Prostate gland (tissue), 2 donors: ENCODE measurements at regions of chr19 and their contacts with region 1.

Region 1: DNA sequence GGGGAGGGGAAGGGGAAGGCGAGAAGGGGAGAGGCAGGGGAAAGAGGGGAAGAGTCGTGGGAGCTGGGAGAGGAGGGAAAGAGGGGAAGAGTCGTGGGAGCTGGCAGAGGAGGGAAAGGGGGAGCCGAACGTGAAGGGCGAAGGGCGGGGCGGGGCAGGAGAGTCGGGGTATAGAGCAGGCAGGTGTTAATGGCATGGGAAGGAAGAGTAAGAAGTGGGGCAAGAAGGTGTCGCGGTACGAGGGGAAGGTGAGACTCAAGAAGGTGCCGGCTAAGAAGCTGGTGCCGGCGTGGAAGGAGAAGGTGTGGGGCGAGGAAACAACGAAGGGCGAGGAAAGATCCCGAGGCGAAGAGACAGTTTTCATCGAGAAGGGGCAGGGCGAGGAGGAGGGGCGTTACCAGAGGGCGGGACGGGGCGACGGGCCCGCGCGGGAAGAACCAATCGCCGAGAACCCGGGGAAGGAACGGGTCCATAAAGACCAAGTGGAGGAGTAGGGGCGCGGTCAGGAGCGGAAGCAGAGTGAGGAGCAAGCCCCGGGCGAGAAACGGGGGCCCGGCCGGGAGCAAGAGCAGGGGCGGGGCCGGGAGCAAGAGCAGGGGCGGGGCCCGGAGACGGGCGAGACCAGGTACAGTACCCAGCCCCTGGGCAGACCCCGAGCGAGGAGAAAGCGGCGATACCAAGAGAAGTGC is 463 bp downstream of the CATSPERG start:
- DNase-seq: peak; percentile 94
- H3K4me3 ChIP-seq: peak overlapping the region; percentile 61 to 69
- H3K27ac ChIP-seq: peak overlapping the region; percentile 95 to 98
- H3K4me1 ChIP-seq: no peaks in the 10 kb centered on the region
- H3K27me3 ChIP-seq: no peaks in the 10 kb centered on the region
- CTCF ChIP-seq: no peak
- POLR2A ChIP-seq: peak; percentile 65

Region 2: GRCh38 chr19:37906869-37907734 is 429.0 kb before region 1 on chr19 and contains the start of gene SIPA1L3:
- intact Hi-C with region 1: loop called (anchors 10 kb)
- DNase-seq: peak; percentile 97
- H3K4me3 ChIP-seq: peak within 1 kb of the TSS; percentile 62 to 98
- H3K27ac ChIP-seq: peak within 1 kb of the TSS; percentile 50 to 74
- H3K4me1 ChIP-seq: peaks cover 7% of the 10 kb centered on the region
- H3K27me3 ChIP-seq: no peaks in the 10 kb centered on the region
- CTCF ChIP-seq: peak in 1 of 4 experiments; percentile 32
- POLR2A ChIP-seq: peak; percentile 83
- total RNA-seq, gene SIPA1L3: 48.8 to 63.5 TPM

Region 3: DNA sequence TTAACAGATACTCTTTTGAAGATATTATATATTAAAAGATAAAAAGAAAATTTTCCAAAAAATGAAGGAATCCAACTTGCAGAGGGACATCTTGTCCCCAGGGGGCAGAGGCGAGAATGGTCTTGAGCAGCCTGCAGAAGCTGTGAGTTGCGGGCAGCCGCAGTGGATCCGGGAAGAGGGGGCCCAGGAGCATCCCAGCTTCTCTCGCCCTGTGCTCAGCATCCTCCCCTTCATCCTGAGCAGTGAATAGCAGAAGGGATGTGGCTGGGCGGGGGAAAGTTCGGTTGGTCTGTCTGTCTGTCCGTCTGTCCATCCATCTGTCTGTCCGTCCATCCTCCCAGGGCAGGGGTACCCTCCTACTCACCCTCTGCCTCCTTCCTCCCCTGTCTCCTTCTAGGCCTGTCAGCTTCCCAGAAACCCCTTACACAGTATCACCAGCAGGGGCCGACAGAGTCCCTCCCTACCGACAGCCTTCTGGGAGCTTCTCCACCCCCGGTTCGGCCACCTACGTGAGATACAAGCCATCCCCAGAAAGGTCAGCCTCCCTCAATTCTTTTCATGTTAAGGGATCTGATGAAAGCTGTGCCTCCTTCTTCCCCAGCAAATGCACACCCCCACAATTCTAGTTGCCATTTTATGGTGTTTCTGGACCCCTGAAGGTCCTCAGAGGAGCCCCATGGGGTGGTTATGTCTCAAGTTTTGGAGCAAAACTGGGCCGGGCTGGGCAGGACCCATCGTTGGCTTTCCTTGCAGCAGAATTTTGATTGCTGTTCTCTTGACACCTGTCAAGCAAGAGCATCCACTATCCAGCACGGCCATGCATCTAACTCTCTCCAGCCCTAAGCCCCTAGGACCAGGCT is 193.7 kb before region 1 on chr19:
- intact Hi-C with region 1: loop called (anchors 10 kb)
- DNase-seq: no peak
- H3K4me3 ChIP-seq: no peak overlapping the region
- H3K27ac ChIP-seq: no peak overlapping the region
- H3K4me1 ChIP-seq: no peaks in the 10 kb centered on the region
- H3K27me3 ChIP-seq: no peaks in the 10 kb centered on the region
- CTCF ChIP-seq: peak in 2 of 4 experiments; percentile 37 to 48
- POLR2A ChIP-seq: no peak

Region 4: GRCh38 chr19:38245826-38246498 is 90.1 kb before region 1 on chr19:
- intact Hi-C with region 1: loop called (anchors 2 kb)
- DNase-seq: no peak
- H3K4me3 ChIP-seq: no peak overlapping the region
- H3K27ac ChIP-seq: no peak overlapping the region
- H3K4me1 ChIP-seq: no peaks in the 10 kb centered on the region
- H3K27me3 ChIP-seq: no peaks in the 10 kb centered on the region
- CTCF ChIP-seq: no peak
- POLR2A ChIP-seq: no peak

Region 5: GRCh38 chr19:38315657-38316476 is 20.2 kb before region 1 on chr19 and contains the start of gene YIF1B:
- intact Hi-C with region 1: no loop called
- DNase-seq: peak; percentile 96
- H3K4me3 ChIP-seq: peak within 1 kb of the TSS; percentile 37 to 48
- H3K27ac ChIP-seq: peak within 1 kb of the TSS; percentile 66 to 79
- H3K4me1 ChIP-seq: no peaks in the 10 kb centered on the region
- H3K27me3 ChIP-seq: no peaks in the 10 kb centered on the region
- CTCF ChIP-seq: peak in 1 of 4 experiments; percentile 26
- POLR2A ChIP-seq: peak; percentile 38
- total RNA-seq, gene YIF1B: 34.7 to 71.9 TPM

Region 6: DNA sequence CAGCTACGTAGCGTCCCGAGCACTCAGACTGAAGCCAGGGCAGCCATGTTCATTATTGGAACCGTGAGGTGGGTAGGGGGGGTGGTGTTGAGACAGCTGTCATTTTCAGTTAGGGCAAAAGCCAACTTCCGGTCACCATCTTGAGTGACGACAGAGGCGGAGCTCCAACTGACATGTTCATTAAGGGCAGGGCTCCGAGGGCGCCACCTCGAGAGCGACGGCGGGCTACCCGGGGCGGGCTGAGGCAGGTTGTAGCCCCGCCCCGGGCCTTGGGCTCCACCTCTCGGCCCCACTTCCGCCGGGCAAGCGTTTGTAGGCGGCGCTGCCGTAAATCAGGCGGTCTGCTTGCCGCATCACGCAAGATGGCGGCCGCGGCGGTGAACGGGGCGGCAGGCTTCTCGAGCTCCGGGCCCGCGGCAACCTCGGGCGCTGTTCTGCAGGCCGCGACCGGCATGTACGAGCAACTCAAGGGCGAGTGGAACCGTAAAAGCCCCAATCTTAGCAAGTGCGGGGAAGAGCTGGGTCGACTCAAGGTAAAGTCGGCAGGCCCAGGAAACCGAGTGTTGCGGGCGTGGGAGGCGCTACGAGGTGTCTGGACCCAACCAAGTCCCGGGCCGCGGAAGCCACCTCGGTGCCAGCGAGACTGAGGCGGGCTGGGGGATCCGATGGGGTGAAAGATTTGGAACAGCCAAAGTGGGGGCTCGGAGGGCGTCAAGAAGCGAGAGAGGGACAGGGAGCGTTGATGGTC is 38.5 kb after region 1 on chr19 and contains the start of gene PSMD8:
- intact Hi-C with region 1: loop called (anchors 2 kb)
- DNase-seq: peak; percentile 100
- H3K4me3 ChIP-seq: peak within 1 kb of the TSS; percentile 75 to 87
- H3K27ac ChIP-seq: peak within 1 kb of the TSS; percentile 93
- H3K4me1 ChIP-seq: peaks cover 14% of the 10 kb centered on the region
- H3K27me3 ChIP-seq: no peaks in the 10 kb centered on the region
- CTCF ChIP-seq: peak; percentile 25 to 49 (median 38)
- POLR2A ChIP-seq: peak; percentile 98
- total RNA-seq, gene PSMD8: 232 to 298 TPM